ENCODE measurements at regions of chr10 and their contacts with region 1.

Region 1: DNA sequence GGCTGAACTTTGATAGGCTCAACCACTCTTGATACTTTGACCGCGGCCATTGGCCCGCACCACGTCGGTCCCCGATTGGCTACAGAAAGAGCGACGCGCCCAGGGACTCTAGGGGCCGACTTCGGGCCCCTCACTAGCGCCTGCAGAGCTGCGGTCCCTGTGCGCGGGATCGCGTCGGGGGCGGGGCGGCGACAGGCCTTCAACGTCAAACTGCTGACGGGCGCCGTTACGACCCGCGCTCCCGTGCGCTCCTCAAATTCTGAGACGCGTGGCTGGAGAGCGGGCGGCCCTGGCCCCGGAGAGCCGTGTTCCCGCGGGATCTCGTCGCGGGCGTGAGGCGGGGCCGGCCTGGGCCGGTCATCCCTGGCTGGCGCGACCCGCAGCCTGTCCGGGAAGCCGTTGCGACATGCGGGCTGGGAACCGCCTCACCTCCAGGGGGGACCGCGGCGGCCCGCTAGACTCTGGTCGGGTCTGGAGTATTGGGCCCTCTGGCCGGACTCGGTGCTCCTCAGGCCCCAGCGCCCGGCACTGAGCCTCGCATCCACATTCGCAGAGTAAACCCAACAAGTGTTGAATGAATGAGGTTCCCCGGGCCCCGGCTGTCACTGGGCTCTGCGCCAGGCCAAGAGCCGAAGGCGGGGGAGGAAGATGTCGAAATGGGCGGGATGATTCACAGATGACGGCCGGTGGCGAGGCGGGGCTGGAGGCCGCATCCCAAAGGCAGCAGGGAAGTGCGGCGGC is 644 bp upstream of the SLC25A28 start:
- DNase-seq: no peak
- ATAC-seq: peak; percentile 83
- H3K4me3 ChIP-seq: peak overlapping the region; percentile 57 to 88 (median 76)
- H3K4me3 Mint-ChIP-seq: peak overlapping the region; percentile 81
- H3K27ac ChIP-seq: peak overlapping the region; percentile 95 to 96
- H3K27ac Mint-ChIP-seq: peak overlapping the region; percentile 90
- H3K4me1 ChIP-seq: peaks cover 30 to 35% of the 10 kb centered on the region in 2 donors
- H3K4me1 Mint-ChIP-seq: peaks cover 45% of the 10 kb centered on the region
- H3K27me3 ChIP-seq: no peaks in the 10 kb centered on the region
- H3K27me3 Mint-ChIP-seq: no peaks in the 10 kb centered on the region
- CTCF ChIP-seq: no peak

Region 2: DNA sequence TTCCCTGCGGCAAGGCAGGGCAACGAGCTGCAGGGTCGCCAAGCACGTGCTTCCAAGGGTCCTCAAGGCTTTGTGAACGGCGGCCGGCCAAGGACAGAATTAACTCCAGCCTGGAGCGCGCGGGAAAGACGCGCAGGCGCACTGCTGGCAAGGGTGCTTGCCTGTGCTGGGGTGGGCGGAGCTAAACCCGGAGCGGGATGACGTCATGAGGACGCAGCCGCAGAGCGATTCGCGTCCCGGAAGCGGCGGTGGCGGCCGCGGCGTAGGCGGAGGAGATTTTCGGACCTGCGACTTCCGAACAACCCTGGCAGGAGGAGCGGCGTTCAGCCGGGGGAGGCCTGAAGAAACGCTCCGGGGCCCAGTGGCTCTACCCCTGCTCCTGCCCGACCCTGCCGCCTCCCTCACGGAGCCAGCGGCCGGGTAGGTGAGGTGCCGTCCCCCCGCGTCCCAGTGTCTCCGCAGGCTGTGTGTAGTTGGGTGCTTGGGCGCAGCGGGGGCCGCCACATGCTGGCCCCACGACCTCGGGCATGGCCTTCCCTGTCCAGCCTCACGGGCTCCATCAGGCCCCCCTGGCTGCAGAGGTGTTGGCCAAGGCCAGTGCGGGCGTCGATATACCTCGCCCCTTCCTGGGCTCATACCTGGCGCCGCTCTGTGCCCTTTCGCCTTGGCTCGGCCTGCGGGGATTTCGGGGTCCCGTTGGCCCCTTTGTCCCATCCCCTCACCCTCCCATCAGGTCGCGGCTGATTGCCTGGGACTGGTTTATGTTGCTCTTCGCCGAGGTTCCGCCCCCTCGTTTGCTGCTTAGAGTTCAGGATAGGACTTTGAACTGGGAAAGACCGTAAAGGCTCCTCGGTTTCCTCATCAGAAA is 1883.7 kb before region 1 on chr10 and contains the start of gene ZFYVE27:
- CTCF ChIA-PET with region 1: no interaction called
- POLR2A ChIA-PET with region 1: no interaction called
- intact Hi-C with region 1: loop called (anchors 5 kb)
- DNase-seq: peak; percentile 98
- ATAC-seq: peak; percentile 92
- H3K4me3 ChIP-seq: peak within 1 kb of the TSS; percentile 46 to 97 (median 77)
- H3K4me3 Mint-ChIP-seq: peak within 1 kb of the TSS; percentile 100
- H3K27ac ChIP-seq: peak within 1 kb of the TSS; percentile 92 to 97
- H3K27ac Mint-ChIP-seq: peak within 1 kb of the TSS; percentile 100
- H3K4me1 ChIP-seq: peaks cover 25 to 39% of the 10 kb centered on the region in 2 donors
- H3K4me1 Mint-ChIP-seq: peaks cover 55% of the 10 kb centered on the region
- H3K27me3 ChIP-seq: no peaks in the 10 kb centered on the region
- H3K27me3 Mint-ChIP-seq: no peaks in the 10 kb centered on the region
- CTCF ChIP-seq: no peak
- total RNA-seq, gene ZFYVE27: 79.0 and 79.7 TPM in 2 replicates

Region 3: DNA sequence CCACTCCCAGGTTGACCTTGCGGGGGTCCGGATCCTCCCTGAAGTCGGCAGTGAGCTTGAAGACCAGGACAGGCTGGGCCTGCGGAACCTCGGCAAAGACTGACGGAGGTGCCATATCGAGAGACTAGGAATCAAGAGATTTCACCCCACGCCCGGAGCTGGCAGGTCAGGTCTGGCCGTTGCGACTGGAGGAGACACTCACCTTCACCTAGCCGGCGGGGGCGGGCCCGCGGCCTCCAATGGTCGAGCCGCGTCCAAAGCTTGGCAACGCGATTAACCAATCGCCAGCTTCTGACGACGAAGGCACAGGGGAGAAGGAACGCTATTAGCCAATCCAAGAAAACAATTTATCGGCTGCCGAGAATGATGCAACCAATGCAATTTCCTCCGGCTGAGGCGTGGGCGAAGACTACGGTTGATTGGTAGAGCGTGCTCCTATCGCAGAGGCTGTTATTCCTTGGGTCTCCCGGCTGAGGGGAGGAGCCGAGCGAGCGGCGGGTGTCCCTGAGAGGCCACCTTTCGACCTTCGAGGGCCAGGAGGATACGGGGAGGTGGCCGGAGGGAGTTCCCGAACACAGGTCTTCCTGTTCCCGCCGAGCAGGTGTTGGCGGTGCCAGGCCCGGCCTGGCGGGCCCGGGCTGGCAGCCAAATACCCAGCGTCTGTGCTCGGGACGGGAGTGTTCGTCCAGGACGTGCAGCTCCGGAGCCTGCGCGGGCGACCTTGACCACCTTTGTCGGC is 190.3 kb before region 1 on chr10 and contains the start of gene GOT1:
- CTCF ChIA-PET with region 1: interaction called, 25 read pairs
- POLR2A ChIA-PET with region 1: interaction called, 11 read pairs
- intact Hi-C with region 1: loop called (anchors 1 kb)
- DNase-seq: peak; percentile 97
- ATAC-seq: peak; percentile 89
- H3K4me3 ChIP-seq: peak within 1 kb of the TSS; percentile 72 to 87 (median 76)
- H3K4me3 Mint-ChIP-seq: peak within 1 kb of the TSS; percentile 99
- H3K27ac ChIP-seq: peak within 1 kb of the TSS; percentile 81 to 85
- H3K27ac Mint-ChIP-seq: peak within 1 kb of the TSS; percentile 96
- H3K4me1 ChIP-seq: peaks cover 13 to 21% of the 10 kb centered on the region in 2 donors
- H3K4me1 Mint-ChIP-seq: peaks cover 28% of the 10 kb centered on the region
- H3K27me3 ChIP-seq: no peaks in the 10 kb centered on the region
- H3K27me3 Mint-ChIP-seq: no peaks in the 10 kb centered on the region
- CTCF ChIP-seq: no peak
- total RNA-seq, gene GOT1: 13.8 and 14.9 TPM in 2 replicates

Region 4: GRCh38 chr10:99470327-99470726 is 150.6 kb before region 1 on chr10:
- CTCF ChIA-PET with region 1: no interaction called
- POLR2A ChIA-PET with region 1: no interaction called
- intact Hi-C with region 1: no loop called
- DNase-seq: no peak
- ATAC-seq: no peak
- H3K4me3 ChIP-seq: no peak overlapping the region
- H3K4me3 Mint-ChIP-seq: no peak overlapping the region
- H3K27ac ChIP-seq: no peak overlapping the region
- H3K27ac Mint-ChIP-seq: no peak overlapping the region
- H3K4me1 ChIP-seq: no peaks in the 10 kb centered on the region
- H3K4me1 Mint-ChIP-seq: no peaks in the 10 kb centered on the region
- H3K27me3 ChIP-seq: peaks cover 0 to 15% (median 10%) of the 10 kb centered on the region in 4 experiments
- H3K27me3 Mint-ChIP-seq: peaks cover 61% of the 10 kb centered on the region
- CTCF ChIP-seq: no peak

Region 5: GRCh38 chr10:99659031-99659867 is 38.4 kb after region 1 on chr10 and contains the start of gene ENTPD7:
- CTCF ChIA-PET with region 1: interaction called, 5 read pairs
- POLR2A ChIA-PET with region 1: interaction called, 12 read pairs
- intact Hi-C with region 1: loop called (anchors 1 kb)
- DNase-seq: peak; percentile 91
- ATAC-seq: peak; percentile 99
- H3K4me3 ChIP-seq: peak within 1 kb of the TSS; percentile 63 to 89 (median 82)
- H3K4me3 Mint-ChIP-seq: peak within 1 kb of the TSS; percentile 84
- H3K27ac ChIP-seq: peak within 1 kb of the TSS in 1 of 2 donors; percentile 64
- H3K27ac Mint-ChIP-seq: peak within 1 kb of the TSS; percentile 32
- H3K4me1 ChIP-seq: peaks cover 7 to 16% of the 10 kb centered on the region in 2 donors
- H3K4me1 Mint-ChIP-seq: peaks cover 19% of the 10 kb centered on the region
- H3K27me3 ChIP-seq: peaks cover 0 to 4% (median 0%) of the 10 kb centered on the region in 4 experiments
- H3K27me3 Mint-ChIP-seq: peaks cover 9% of the 10 kb centered on the region
- CTCF ChIP-seq: peak; percentile 19
- total RNA-seq, gene ENTPD7: 6.0 and 6.2 TPM in 2 replicates

Region 6: GRCh38 chr10:99732033-99732912 is 111.4 kb after region 1 on chr10 and contains the starts of genes COX15 and CUTC:
- CTCF ChIA-PET with region 1: interaction called, 4 read pairs
- POLR2A ChIA-PET with region 1: interaction called, 5 read pairs
- intact Hi-C with region 1: loop called (anchors 1 kb)
- DNase-seq: peak; percentile 95
- ATAC-seq: peak; percentile 93
- H3K4me3 ChIP-seq: peak within 1 kb of the TSS; percentile 84 to 99 (median 93)
- H3K4me3 Mint-ChIP-seq: peak within 1 kb of the TSS; percentile 95
- H3K27ac ChIP-seq: peak within 1 kb of the TSS; percentile 82 to 83
- H3K27ac Mint-ChIP-seq: peak within 1 kb of the TSS; percentile 99
- H3K4me1 ChIP-seq: peaks cover 13 to 24% of the 10 kb centered on the region in 2 donors
- H3K4me1 Mint-ChIP-seq: peaks cover 32% of the 10 kb centered on the region
- H3K27me3 ChIP-seq: no peaks in the 10 kb centered on the region
- H3K27me3 Mint-ChIP-seq: no peaks in the 10 kb centered on the region
- CTCF ChIP-seq: peak; percentile 64
- total RNA-seq, gene COX15: 39.5 and 47.4 TPM in 2 replicates
- total RNA-seq, gene CUTC: 32.0 and 33.3 TPM in 2 replicates

Region 7: GRCh38 chr10:100998991-100999741 is 1378.3 kb after region 1 on chr10:
- CTCF ChIA-PET with region 1: no interaction called
- POLR2A ChIA-PET with region 1: no interaction called
- intact Hi-C with region 1: loop called (anchors 5 kb)
- DNase-seq: peak; percentile 88
- ATAC-seq: peak; percentile 59
- H3K4me3 ChIP-seq: peak overlapping the region; percentile 37 to 89 (median 86)
- H3K4me3 Mint-ChIP-seq: peak overlapping the region; percentile 95
- H3K27ac ChIP-seq: peak overlapping the region; percentile 84 to 87
- H3K27ac Mint-ChIP-seq: peak overlapping the region; percentile 96
- H3K4me1 ChIP-seq: peaks cover 22 to 34% of the 10 kb centered on the region in 2 donors
- H3K4me1 Mint-ChIP-seq: peaks cover 29% of the 10 kb centered on the region
- H3K27me3 ChIP-seq: peaks cover 0 to 2% (median 0%) of the 10 kb centered on the region in 4 experiments
- H3K27me3 Mint-ChIP-seq: no peaks in the 10 kb centered on the region
- CTCF ChIP-seq: peak; percentile 88

Measured in B cell (primary cell).